Caco-2 (cell line): ENCODE measurements at regions of chr6 and their contacts with region 1.

Region 1: GRCh38 chr6:110873981-110874879 is at the start of gene AMD1:
- DNase-seq: peak; percentile 97
- H3K4me3 ChIP-seq: peak within 1 kb of the TSS; percentile 93
- H3K4me3 Mint-ChIP-seq: peak within 1 kb of the TSS; percentile 98
- H3K27ac Mint-ChIP-seq: peak within 1 kb of the TSS; percentile 95
- H3K4me1 ChIP-seq: peaks cover 33% of the 10 kb centered on the region
- H3K4me1 Mint-ChIP-seq: peaks cover 18% of the 10 kb centered on the region
- H3K27me3 ChIP-seq: no peaks in the 10 kb centered on the region
- H3K27me3 Mint-ChIP-seq: no peaks in the 10 kb centered on the region
- CTCF ChIP-seq: no peak
- total RNA-seq, gene AMD1: 84.0 and 90.0 TPM in 2 replicates

Region 2: GRCh38 chr6:110682460-110682853 is 191.8 kb before region 1 on chr6:
- CTCF ChIA-PET with region 1: interaction called, 7 read pairs
- POLR2A ChIA-PET with region 1: interaction called, 13 read pairs
- intact Hi-C with region 1: loop called (anchors 1 kb)
- DNase-seq: peak; percentile 71 to 77
- H3K4me3 ChIP-seq: no peak overlapping the region
- H3K4me3 Mint-ChIP-seq: no peak overlapping the region
- H3K27ac Mint-ChIP-seq: peak overlapping the region; percentile 72
- H3K4me1 ChIP-seq: peaks cover 14% of the 10 kb centered on the region
- H3K4me1 Mint-ChIP-seq: peaks cover 12% of the 10 kb centered on the region
- H3K27me3 ChIP-seq: no peaks in the 10 kb centered on the region
- H3K27me3 Mint-ChIP-seq: no peaks in the 10 kb centered on the region
- CTCF ChIP-seq: peak; percentile 68 to 69

Region 3: GRCh38 chr6:110756817-110757216 is 117.4 kb before region 1 on chr6:
- CTCF ChIA-PET with region 1: no interaction called
- POLR2A ChIA-PET with region 1: interaction called, 9 read pairs
- intact Hi-C with region 1: loop called (anchors 5 kb)
- DNase-seq: no peak
- H3K4me3 ChIP-seq: no peak overlapping the region
- H3K4me3 Mint-ChIP-seq: no peak overlapping the region
- H3K27ac Mint-ChIP-seq: peak overlapping the region; percentile 28
- H3K4me1 ChIP-seq: peaks cover 42% of the 10 kb centered on the region
- H3K4me1 Mint-ChIP-seq: peaks cover 37% of the 10 kb centered on the region
- H3K27me3 ChIP-seq: no peaks in the 10 kb centered on the region
- H3K27me3 Mint-ChIP-seq: no peaks in the 10 kb centered on the region
- CTCF ChIP-seq: no peak

Region 4: DNA sequence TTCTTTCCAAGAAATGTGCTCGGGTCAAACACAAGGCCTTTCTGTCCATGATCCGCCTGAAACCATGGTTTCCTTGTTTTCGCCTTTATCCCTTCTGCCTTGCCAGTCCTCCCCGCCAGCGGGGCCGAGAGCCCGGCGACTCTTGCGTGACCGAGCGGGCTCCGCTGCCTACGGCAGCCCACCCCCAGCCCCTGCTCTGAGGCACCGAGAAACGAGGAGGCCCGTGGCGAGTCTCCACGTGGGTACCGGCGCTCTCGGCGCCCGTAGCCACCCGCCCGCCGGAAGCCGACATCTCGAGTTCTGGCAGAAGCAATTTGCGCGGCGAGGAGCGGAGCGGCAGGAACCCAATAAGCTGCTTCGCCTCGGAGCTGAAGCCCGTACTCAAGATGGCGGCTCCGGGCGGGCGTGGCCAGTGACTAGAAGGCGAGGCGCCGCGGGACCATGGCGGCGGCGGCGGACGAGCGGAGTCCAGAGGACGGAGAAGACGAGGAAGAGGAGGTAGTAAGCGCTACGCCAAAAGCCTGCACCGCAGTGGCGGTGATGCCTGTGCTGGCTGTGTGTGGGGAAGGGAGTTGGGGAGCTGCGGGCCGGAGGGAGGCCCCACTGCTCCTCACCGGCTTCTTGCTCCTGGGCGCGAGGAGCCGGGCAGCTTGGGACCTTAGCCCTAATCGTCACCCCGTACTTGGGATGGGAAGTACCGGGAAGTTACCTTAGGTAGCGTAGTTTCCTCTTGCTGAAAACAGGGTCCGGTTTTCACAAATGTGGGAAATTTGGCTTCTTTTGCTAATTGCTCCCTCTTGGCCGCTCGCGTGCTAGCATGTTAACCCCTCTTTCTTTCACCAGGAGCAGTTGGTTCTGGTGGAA is 84.3 kb after region 1 on chr6 and contains the start of gene GTF3C6:
- CTCF ChIA-PET with region 1: no interaction called
- POLR2A ChIA-PET with region 1: interaction called, 25 read pairs
- intact Hi-C with region 1: no loop called
- DNase-seq: peak; percentile 91 to 93
- H3K4me3 ChIP-seq: peak within 1 kb of the TSS; percentile 96
- H3K4me3 Mint-ChIP-seq: peak within 1 kb of the TSS; percentile 94
- H3K27ac Mint-ChIP-seq: peak within 1 kb of the TSS; percentile 97
- H3K4me1 ChIP-seq: peaks cover 10% of the 10 kb centered on the region
- H3K4me1 Mint-ChIP-seq: peaks cover 7% of the 10 kb centered on the region
- H3K27me3 ChIP-seq: no peaks in the 10 kb centered on the region
- H3K27me3 Mint-ChIP-seq: no peaks in the 10 kb centered on the region
- CTCF ChIP-seq: no peak
- total RNA-seq, gene GTF3C6: 109 and 114 TPM in 2 replicates

Region 5: DNA sequence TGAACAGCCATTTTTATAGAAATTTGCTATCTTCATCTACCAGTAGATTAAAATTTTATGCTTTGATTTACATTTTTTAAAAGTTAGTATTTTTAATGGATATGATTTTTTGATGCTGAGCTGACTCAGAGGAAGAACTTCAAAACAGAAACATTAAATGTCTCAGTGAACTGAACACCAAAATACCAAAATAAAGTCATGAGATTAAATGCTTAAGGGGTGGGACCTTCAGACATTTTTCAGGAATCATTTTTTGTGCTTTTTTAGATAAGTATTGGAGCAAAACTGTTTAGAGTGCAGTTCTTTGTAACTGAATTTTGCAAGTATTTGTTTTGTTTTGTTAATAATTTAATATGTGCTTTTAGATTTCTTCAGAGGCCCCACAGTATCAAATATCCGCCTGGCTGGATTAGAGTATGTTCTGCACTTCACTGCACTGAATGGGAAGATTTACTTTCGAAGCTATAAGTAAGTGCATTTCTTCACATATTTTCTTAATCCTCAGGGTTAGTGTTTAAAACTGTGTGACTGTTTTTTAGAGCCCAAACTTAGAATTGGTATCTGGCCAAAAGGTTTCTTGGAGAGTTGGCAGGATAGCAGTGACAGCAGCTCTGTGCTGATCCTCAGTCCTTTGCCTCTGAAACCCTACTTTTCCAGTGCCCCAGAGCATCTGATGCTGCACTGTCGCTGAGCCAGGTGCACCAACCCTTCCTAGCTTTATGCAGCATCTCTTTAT is 141.3 kb after region 1 on chr6:
- CTCF ChIA-PET with region 1: no interaction called
- POLR2A ChIA-PET with region 1: no interaction called
- intact Hi-C with region 1: no loop called
- DNase-seq: no peak
- H3K4me3 ChIP-seq: no peak overlapping the region
- H3K4me3 Mint-ChIP-seq: no peak overlapping the region
- H3K27ac Mint-ChIP-seq: no peak overlapping the region
- H3K4me1 ChIP-seq: no peaks in the 10 kb centered on the region
- H3K4me1 Mint-ChIP-seq: no peaks in the 10 kb centered on the region
- H3K27me3 ChIP-seq: no peaks in the 10 kb centered on the region
- H3K27me3 Mint-ChIP-seq: no peaks in the 10 kb centered on the region
- CTCF ChIP-seq: no peak

Region 6: GRCh38 chr6:111605100-111605751 is 731.0 kb after region 1 on chr6:
- CTCF ChIA-PET with region 1: no interaction called
- POLR2A ChIA-PET with region 1: no interaction called
- intact Hi-C with region 1: loop called (anchors 5 kb)
- DNase-seq: peak; percentile 58 to 59
- H3K4me3 ChIP-seq: peak overlapping the region; percentile 46
- H3K4me3 Mint-ChIP-seq: peak overlapping the region; percentile 90
- H3K27ac Mint-ChIP-seq: peak overlapping the region; percentile 91
- H3K4me1 ChIP-seq: peaks cover 22% of the 10 kb centered on the region
- H3K4me1 Mint-ChIP-seq: peaks cover 22% of the 10 kb centered on the region
- H3K27me3 ChIP-seq: no peaks in the 10 kb centered on the region
- H3K27me3 Mint-ChIP-seq: no peaks in the 10 kb centered on the region
- CTCF ChIP-seq: no peak